CD4-positive, alpha-beta memory T cell (primary cell): ENCODE measurements at regions of chr12 and their contacts with region 1.

Region 1: GRCh38 chr12:51270067-51270970 is at the start of gene SMAGP:
- DNase-seq: peak; percentile 36 to 51 (median 38)
- H3K4me3 ChIP-seq: peak within 1 kb of the TSS; percentile 3 to 57
- H3K4me3 Mint-ChIP-seq: peak within 1 kb of the TSS; percentile 88 to 97 (median 96)
- H3K27ac ChIP-seq: peak within 1 kb of the TSS; percentile 2
- H3K27ac Mint-ChIP-seq: peak within 1 kb of the TSS; percentile 80 to 95 (median 90)
- H3K4me1 ChIP-seq: peaks cover 20% of the 10 kb centered on the region
- H3K4me1 Mint-ChIP-seq: peaks cover 19 to 38% (median 24%) of the 10 kb centered on the region in 4 donors
- H3K27me3 ChIP-seq: no peaks in the 10 kb centered on the region
- H3K27me3 Mint-ChIP-seq: no peaks in the 10 kb centered on the region
- total RNA-seq, gene SMAGP: 3.9 to 5.5 TPM

Region 2: DNA sequence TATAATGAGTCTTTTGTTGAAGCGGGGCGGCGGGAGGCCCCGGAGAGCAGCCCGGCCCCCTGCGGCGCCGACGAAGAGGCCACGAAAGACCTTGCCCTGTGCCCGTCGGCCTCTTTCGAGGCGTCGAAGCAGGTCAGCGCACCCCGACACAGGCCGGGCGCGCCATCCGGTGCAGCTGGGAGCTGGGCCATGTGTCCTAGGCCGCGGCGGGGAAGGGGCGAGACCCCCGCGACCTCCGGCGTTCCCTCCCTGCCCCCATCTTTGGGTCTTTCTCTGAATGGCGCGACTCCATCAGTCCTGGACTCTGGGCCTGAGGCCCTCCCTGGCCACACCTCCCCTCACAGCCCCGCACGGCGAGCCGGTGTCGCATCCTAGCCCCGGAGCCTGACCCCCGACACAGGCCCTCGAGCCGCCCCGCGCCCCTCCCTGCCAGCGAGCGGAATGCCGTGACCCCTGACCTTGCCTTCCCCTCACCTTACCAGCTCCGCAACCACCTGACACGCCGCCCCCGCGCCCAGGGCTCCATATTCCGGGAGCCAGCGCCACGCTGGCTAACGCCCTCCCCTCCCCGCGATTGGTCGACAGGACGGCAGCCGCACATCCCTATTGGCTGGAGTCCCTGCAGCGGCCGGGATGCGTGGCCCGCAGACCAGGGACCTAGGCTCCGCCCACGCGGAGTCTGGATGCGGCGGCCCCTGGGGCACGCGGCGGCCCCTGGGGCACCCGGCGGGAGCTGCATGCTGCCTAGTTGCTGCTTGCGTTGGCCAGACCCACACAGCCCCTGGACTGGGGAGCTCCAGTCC is 244.3 kb before region 1 on chr12 and contains the start of gene SLC11A2:
- CTCF ChIA-PET with region 1: no interaction called
- POLR2A ChIA-PET with region 1: no interaction called
- intact Hi-C with region 1: no loop called
- DNase-seq: peak; percentile 89 to 93 (median 89)
- H3K4me3 ChIP-seq: peak within 1 kb of the TSS; percentile 78 to 89
- H3K4me3 Mint-ChIP-seq: peak within 1 kb of the TSS; percentile 97 to 100 (median 98)
- H3K27ac ChIP-seq: peak within 1 kb of the TSS; percentile 83
- H3K27ac Mint-ChIP-seq: peak within 1 kb of the TSS; percentile 95 to 99 (median 98)
- H3K4me1 ChIP-seq: peaks cover 41% of the 10 kb centered on the region
- H3K4me1 Mint-ChIP-seq: peaks cover 26 to 68% (median 47%) of the 10 kb centered on the region in 4 donors
- H3K27me3 ChIP-seq: no peaks in the 10 kb centered on the region
- H3K27me3 Mint-ChIP-seq: no peaks in the 10 kb centered on the region
- total RNA-seq, gene SLC11A2: 55.1 to 62.7 TPM

Region 3: GRCh38 chr12:51320695-51321320 is 50.5 kb after region 1 on chr12:
- CTCF ChIA-PET with region 1: interaction called, 6 read pairs
- POLR2A ChIA-PET with region 1: interaction called, 13 read pairs
- intact Hi-C with region 1: no loop called
- DNase-seq: peak in 1 of 5 donors; percentile 29
- H3K4me3 ChIP-seq: peak overlapping the region; percentile 61 to 73
- H3K4me3 Mint-ChIP-seq: peak overlapping the region; percentile 82 to 99 (median 96)
- H3K27ac ChIP-seq: peak overlapping the region; percentile 94
- H3K27ac Mint-ChIP-seq: peak overlapping the region; percentile 95 to 98 (median 98)
- H3K4me1 ChIP-seq: peaks cover 78% of the 10 kb centered on the region
- H3K4me1 Mint-ChIP-seq: peaks cover 53 to 93% (median 72%) of the 10 kb centered on the region in 4 donors
- H3K27me3 ChIP-seq: no peaks in the 10 kb centered on the region
- H3K27me3 Mint-ChIP-seq: no peaks in the 10 kb centered on the region

Region 4: DNA sequence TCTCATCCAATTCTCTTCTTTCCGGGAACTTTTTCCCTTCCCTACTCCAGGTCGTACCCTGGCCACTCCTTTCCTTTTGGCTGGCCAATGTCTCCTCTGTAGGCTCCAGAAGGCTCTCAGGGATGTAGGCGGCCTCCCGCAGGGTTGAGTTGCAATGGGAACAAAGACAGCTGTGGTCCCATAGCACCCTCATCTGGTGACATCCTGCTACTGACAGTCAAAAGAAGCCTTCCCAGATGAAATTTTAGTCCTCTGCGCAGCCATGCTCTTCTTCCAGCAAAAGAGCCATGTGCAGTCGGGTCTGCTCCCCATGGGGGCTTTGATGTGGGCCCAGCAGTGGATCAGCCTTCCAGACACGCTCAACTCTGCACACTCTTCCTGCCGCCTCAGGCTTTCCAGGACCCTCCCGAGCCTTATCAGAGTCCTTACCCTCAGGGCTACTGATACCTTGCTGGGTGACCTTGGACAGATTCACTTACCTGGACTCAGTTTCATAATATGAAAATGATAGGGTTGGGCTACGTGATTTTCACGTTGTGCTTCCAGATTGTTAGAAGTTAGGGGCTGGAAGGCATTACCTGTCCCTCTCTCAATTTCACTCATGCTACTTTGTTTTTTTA is 81.7 kb after region 1 on chr12:
- CTCF ChIA-PET with region 1: interaction called, 16 read pairs
- POLR2A ChIA-PET with region 1: no interaction called
- intact Hi-C with region 1: no loop called
- DNase-seq: peak; percentile 49 to 60 (median 50)
- H3K4me3 ChIP-seq: no peak overlapping the region
- H3K4me3 Mint-ChIP-seq: no peak overlapping the region
- H3K27ac ChIP-seq: no peak overlapping the region
- H3K27ac Mint-ChIP-seq: peak overlapping the region in 5 of 7 donors; percentile 5 to 83 (median 28)
- H3K4me1 ChIP-seq: no peaks in the 10 kb centered on the region
- H3K4me1 Mint-ChIP-seq: peaks cover 0 to 12% (median 4%) of the 10 kb centered on the region in 4 donors
- H3K27me3 ChIP-seq: no peaks in the 10 kb centered on the region
- H3K27me3 Mint-ChIP-seq: no peaks in the 10 kb centered on the region

Region 5: GRCh38 chr12:51403681-51404136 is 133.4 kb after region 1 on chr12:
- CTCF ChIA-PET with region 1: no interaction called
- POLR2A ChIA-PET with region 1: no interaction called
- intact Hi-C with region 1: no loop called
- DNase-seq: no peak
- H3K4me3 ChIP-seq: no peak overlapping the region
- H3K4me3 Mint-ChIP-seq: no peak overlapping the region
- H3K27ac ChIP-seq: no peak overlapping the region
- H3K27ac Mint-ChIP-seq: no peak overlapping the region
- H3K4me1 ChIP-seq: no peaks in the 10 kb centered on the region
- H3K4me1 Mint-ChIP-seq: no peaks in the 10 kb centered on the region
- H3K27me3 ChIP-seq: no peaks in the 10 kb centered on the region
- H3K27me3 Mint-ChIP-seq: no peaks in the 10 kb centered on the region